ENCODE measurements at regions of chr19 and their contacts with region 1.

Region 1: GRCh38 chr19:5091018-5091683 is 122.2 kb downstream of the KDM4B start:
- DNase-seq: peak in 8 of 10 donors; percentile 37 to 84 (median 70)
- H3K4me3 ChIP-seq: peak overlapping the region in 3 of 59 donors; percentile 4 to 22 (median 7)
- H3K27ac ChIP-seq: peak overlapping the region in 32 of 59 donors; percentile 6 to 74 (median 46)
- H3K27me3 ChIP-seq: no peaks in the 10 kb centered on the region
- CTCF ChIP-seq: no peak

Region 2: GRCh38 chr19:5018224-5019015 is 72.7 kb before region 1 on chr19:
- intact Hi-C with region 1: no loop called
- DNase-seq: no peak
- H3K4me3 ChIP-seq: no peak overlapping the region
- H3K27ac ChIP-seq: no peak overlapping the region
- H3K27me3 ChIP-seq: no peaks in the 10 kb centered on the region
- CTCF ChIP-seq: no peak

Region 3: GRCh38 chr19:5112681-5113557 is 21.8 kb after region 1 on chr19:
- intact Hi-C with region 1: no loop called
- DNase-seq: no peak
- H3K4me3 ChIP-seq: no peak overlapping the region
- H3K27ac ChIP-seq: peak overlapping the region in 9 of 59 donors; percentile 12 to 52 (median 38)
- H3K27me3 ChIP-seq: no peaks in the 10 kb centered on the region
- CTCF ChIP-seq: no peak

Region 4: GRCh38 chr19:5138606-5139582 is 47.7 kb after region 1 on chr19:
- intact Hi-C with region 1: loop called in 1 of 2 experiments (anchors 5 kb)
- DNase-seq: peak in 4 of 10 donors; percentile 43 to 78 (median 68)
- H3K4me3 ChIP-seq: no peak overlapping the region
- H3K27ac ChIP-seq: peak overlapping the region in 13 of 59 donors; percentile 6 to 87 (median 22)
- H3K27me3 ChIP-seq: no peaks in the 10 kb centered on the region
- CTCF ChIP-seq: peak in 1 of 56 donors; percentile 15

Measured in dorsolateral prefrontal cortex (tissue), 120 donors.